Activated CD4-positive, alpha-beta memory T cell treated with anti-CD3 and anti-CD28 coated beads for 36 hours (primary cell): ENCODE measurements at regions of chr6 and their contacts with region 1.

Region 1: DNA sequence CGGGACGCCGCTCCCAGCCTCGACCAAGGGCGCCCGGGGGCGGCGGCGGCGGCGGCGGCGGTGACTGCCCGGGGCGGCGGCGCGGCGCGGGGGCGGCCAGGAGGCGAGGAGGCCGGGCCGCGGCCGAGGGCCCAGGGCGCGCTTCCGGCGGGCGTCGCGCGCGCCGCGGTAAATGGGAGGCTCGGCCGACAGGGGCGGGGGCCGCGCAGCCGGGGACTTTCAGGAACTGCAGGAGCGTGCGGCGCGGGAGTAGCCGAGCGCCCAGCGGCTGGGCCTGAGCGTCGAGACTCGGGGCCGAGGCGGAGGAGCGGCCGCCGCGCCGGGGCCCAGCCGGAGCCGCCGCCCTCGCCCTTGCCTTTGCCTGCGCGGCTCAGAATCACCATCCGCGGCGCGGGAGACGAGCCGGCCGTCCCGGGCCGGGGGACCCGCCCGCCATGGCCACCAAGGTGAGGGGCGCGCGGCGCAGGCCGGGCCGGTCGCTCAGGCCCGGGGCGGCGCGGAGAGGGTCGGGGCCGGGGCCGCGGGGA is at the start of gene SNX9:
- DNase-seq: peak; percentile 81
- H3K4me3 Mint-ChIP-seq: peak within 1 kb of the TSS; percentile 96
- H3K27ac Mint-ChIP-seq: peak within 1 kb of the TSS; percentile 99
- H3K4me1 Mint-ChIP-seq: peaks cover 38% of the 10 kb centered on the region
- H3K27me3 Mint-ChIP-seq: no peaks in the 10 kb centered on the region
- total RNA-seq, gene SNX9: 59.3 to 59.7 TPM

Region 2: GRCh38 chr6:157607317-157608109 is 215.6 kb before region 1 on chr6:
- CTCF ChIA-PET with region 1: no interaction called
- POLR2A ChIA-PET with region 1: no interaction called
- intact Hi-C with region 1: no loop called
- DNase-seq: no peak
- H3K4me3 Mint-ChIP-seq: no peak overlapping the region
- H3K27ac Mint-ChIP-seq: no peak overlapping the region
- H3K4me1 Mint-ChIP-seq: no peaks in the 10 kb centered on the region
- H3K27me3 Mint-ChIP-seq: no peaks in the 10 kb centered on the region

Region 3: GRCh38 chr6:157800420-157801237 is 22.4 kb before region 1 on chr6:
- CTCF ChIA-PET with region 1: interaction called, 3 read pairs
- POLR2A ChIA-PET with region 1: interaction called, 5 read pairs
- intact Hi-C with region 1: loop called (anchors 1 kb)
- DNase-seq: peak; percentile 71
- H3K4me3 Mint-ChIP-seq: peak overlapping the region; percentile 30
- H3K27ac Mint-ChIP-seq: peak overlapping the region; percentile 72
- H3K4me1 Mint-ChIP-seq: peaks cover 60% of the 10 kb centered on the region
- H3K27me3 Mint-ChIP-seq: peaks cover 13% of the 10 kb centered on the region

Region 4: DNA sequence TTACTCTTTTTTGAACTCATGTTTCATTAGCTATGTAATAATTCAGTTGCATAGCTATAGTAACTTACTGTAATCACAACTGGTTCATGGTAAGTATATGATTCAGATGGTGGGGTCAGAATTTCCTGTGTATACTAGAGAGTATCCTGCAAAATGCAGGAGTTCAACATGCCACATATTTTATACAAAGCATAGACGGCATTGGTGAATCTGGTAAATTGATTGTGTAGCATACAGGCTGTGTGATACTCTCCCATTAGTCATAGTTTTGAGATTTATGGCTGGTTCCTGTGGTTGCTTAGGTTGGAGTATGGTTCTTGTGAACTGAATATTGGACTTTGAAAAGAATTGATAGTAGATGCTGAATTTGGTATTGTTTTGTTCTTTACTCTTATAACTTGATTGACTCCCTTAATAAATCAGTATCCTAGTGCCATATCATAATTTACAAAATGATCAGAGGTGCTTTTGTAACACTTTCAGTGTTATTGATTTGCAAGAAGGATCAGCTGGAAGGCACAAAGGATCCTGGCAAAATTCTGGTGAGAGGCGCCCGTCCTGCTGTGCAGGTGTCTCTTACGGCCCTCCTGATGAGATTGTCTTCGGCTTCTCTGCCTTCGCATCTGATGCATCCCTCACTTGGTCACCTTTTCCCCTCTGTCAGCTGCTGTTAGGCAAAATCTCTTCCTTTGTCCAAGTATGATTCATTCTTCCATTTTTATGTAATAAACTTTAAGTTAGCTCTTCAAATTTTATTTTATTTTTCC is 22.6 kb after region 1 on chr6:
- CTCF ChIA-PET with region 1: no interaction called
- POLR2A ChIA-PET with region 1: no interaction called
- intact Hi-C with region 1: loop called (anchors 1 kb)
- DNase-seq: no peak
- H3K4me3 Mint-ChIP-seq: no peak overlapping the region
- H3K27ac Mint-ChIP-seq: peak overlapping the region; percentile 63
- H3K4me1 Mint-ChIP-seq: peaks cover 91% of the 10 kb centered on the region
- H3K27me3 Mint-ChIP-seq: no peaks in the 10 kb centered on the region

Region 5: DNA sequence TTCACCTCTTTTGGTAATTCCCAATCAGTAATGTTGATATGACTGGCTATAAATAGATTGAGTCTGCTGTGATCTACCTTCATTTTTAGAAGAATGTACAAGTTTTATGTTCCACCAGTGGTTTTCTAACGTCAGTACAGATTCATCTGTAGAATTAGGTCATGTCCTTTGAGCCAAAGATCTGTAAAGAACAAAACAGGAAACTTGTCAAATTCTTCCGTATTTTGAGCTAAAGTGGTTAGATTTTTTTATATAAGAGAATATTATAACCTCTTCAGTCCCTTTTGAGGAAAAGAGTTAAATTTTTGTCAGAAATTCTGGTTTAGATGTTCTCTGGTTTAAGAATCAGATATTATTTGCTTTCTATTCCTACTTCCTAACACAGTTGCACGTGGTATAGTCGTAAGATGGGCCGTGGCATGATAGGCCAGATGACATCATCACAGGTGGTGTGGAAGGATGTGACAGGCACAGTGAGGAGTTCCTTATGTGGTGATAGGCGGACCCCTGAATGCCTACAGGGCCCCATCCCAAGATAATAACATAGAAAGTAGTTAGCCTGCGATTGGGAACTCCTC is 62.2 kb after region 1 on chr6:
- CTCF ChIA-PET with region 1: no interaction called
- POLR2A ChIA-PET with region 1: no interaction called
- intact Hi-C with region 1: loop called (anchors 1 kb)
- DNase-seq: peak; percentile 75
- H3K4me3 Mint-ChIP-seq: no peak overlapping the region
- H3K27ac Mint-ChIP-seq: peak overlapping the region; percentile 94
- H3K4me1 Mint-ChIP-seq: peaks cover 68% of the 10 kb centered on the region
- H3K27me3 Mint-ChIP-seq: no peaks in the 10 kb centered on the region

Region 6: DNA sequence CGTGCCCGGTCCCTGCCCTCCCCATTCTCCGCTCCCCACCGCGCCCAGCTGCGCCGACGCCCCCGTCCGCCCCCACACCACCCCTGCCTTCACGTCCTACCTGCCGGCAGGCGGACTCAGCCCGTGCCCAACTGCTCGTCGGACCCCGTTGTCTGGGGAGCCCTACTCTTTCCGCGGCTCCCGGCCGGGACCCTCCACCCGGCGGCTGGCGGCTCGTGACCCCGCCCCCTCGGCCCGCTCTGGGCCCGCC is 344.9 kb after region 1 on chr6 and contains the start of gene SERAC1:
- CTCF ChIA-PET with region 1: no interaction called
- POLR2A ChIA-PET with region 1: no interaction called
- intact Hi-C with region 1: loop called (anchors 5 kb)
- DNase-seq: no peak
- H3K4me3 Mint-ChIP-seq: peak within 1 kb of the TSS; percentile 91
- H3K27ac Mint-ChIP-seq: peak within 1 kb of the TSS; percentile 95
- H3K4me1 Mint-ChIP-seq: peaks cover 33% of the 10 kb centered on the region
- H3K27me3 Mint-ChIP-seq: no peaks in the 10 kb centered on the region
- total RNA-seq, gene SERAC1: 7.8 to 8.9 TPM